ENCODE measurements at regions of chr7 and their contacts with region 1.

Region 1: GRCh38 chr7:114033475-114033874 is 114.7 kb upstream of the PPP1R3A start:
- DNase-seq: no peak
- ATAC-seq: no peak
- H3K4me3 ChIP-seq: no peak overlapping the region
- H3K27ac ChIP-seq: no peak overlapping the region
- H3K4me1 ChIP-seq: no peaks in the 10 kb centered on the region
- H3K27me3 ChIP-seq: no peaks in the 10 kb centered on the region
- CTCF ChIP-seq: no peak

Region 2: DNA sequence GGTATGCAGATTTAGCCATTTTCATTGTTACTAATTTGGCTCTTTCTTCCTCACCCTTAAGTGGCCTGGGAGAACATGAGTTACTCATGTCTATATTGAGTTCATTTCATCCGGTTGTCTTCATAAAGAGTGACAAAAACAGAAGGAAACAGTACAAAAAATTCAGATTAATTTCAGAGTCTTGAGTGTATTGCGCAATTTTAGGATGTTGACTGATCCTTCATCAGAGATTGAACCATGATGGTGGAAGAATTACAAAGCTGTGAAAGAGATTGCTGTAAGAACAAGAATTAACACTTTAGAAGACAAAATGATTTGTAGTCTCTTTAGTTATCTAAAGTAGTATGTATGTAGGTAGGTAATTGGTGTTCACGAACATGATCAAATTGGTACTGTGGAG is 79.3 kb after region 1 on chr7:
- intact Hi-C with region 1: no loop called
- DNase-seq: no peak
- ATAC-seq: no peak
- H3K4me3 ChIP-seq: no peak overlapping the region
- H3K27ac ChIP-seq: peak overlapping the region; percentile 24
- H3K4me1 ChIP-seq: peaks cover 56% of the 10 kb centered on the region
- H3K27me3 ChIP-seq: no peaks in the 10 kb centered on the region
- CTCF ChIP-seq: no peak

Region 3: GRCh38 chr7:114653364-114654088 is 620.1 kb after region 1 on chr7:
- intact Hi-C with region 1: loop called in 1 of 2 experiments (anchors 10 kb)
- DNase-seq: no peak
- ATAC-seq: no peak
- H3K4me3 ChIP-seq: no peak overlapping the region
- H3K27ac ChIP-seq: no peak overlapping the region
- H3K4me1 ChIP-seq: no peaks in the 10 kb centered on the region
- H3K27me3 ChIP-seq: no peaks in the 10 kb centered on the region
- CTCF ChIP-seq: no peak